Motor neuron (in vitro differentiated cells): ENCODE measurements at regions of chr1 and their contacts with region 1.

Region 1: DNA sequence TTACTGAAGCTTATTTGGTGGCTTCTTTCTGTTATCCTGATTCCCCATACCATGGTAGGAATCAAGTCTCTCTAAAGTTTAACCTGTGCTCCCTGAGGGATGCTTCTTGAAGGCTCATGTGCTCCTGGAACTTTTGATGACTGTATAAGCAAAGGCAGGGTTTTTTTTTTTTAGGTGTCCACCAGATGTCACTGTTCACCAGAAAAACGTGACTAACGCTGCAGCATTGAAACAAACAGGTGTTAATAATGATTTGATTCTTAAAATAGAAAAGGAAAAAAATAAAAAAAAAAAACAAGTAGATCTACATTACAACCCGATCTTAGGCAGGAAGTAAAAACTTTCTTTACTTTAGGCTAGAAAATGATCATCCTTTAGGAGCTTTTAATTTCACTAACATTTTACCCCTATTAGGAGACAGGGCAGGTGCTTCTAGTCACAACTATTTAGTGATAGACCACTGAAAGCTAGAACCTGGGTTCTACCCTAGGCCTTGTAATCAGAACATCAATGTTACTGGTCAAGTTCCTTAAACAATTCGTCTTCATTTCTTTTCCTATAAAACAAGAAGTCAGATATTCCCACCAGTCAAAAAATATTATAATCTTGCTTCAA is 223.0 kb downstream of the PLA2G4A start:
- ATAC-seq: peak; percentile 45 to 72 (median 60)
- H3K4me3 ChIP-seq: no peak overlapping the region
- H3K27ac ChIP-seq: no peak overlapping the region
- H3K4me1 ChIP-seq: no peaks in the 10 kb centered on the region

Region 2: DNA sequence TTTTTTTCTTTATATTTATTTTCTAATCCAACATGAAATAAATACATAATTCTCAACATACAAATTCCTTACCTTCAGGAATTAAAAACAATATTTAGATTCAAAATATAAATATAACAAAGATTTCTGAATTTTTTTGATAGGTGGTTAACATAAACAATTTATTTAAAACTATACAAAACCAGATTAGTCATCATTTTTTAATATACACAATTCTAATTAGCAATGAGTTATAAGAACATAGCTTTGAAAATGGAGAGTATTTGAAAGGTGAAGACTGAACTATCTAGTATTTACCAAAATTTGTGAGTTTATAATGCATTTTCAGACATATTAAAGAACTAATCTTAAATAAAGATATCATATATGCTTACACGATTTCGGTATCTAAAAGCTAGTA is 714.2 kb before region 1 on chr1:
- in situ Hi-C with region 1: no loop called
- ATAC-seq: no peak
- H3K4me3 ChIP-seq: no peak overlapping the region
- H3K27ac ChIP-seq: no peak overlapping the region
- H3K4me1 ChIP-seq: no peaks in the 10 kb centered on the region

Region 3: GRCh38 chr1:187237542-187237941 is 185.8 kb after region 1 on chr1:
- in situ Hi-C with region 1: no loop called
- ATAC-seq: no peak
- H3K4me3 ChIP-seq: no peak overlapping the region
- H3K27ac ChIP-seq: no peak overlapping the region
- H3K4me1 ChIP-seq: peaks cover 9 to 13% of the 10 kb centered on the region in 2 donors

Region 4: GRCh38 chr1:187264995-187265602 is 213.4 kb after region 1 on chr1:
- in situ Hi-C with region 1: loop called in 1 of 9 experiments (anchors 25 kb)
- ATAC-seq: peak; percentile 82 to 93 (median 88)
- H3K4me3 ChIP-seq: no peak overlapping the region
- H3K27ac ChIP-seq: no peak overlapping the region
- H3K4me1 ChIP-seq: no peaks in the 10 kb centered on the region

Region 5: GRCh38 chr1:187443939-187444338 is 392.2 kb after region 1 on chr1:
- in situ Hi-C with region 1: no loop called
- ATAC-seq: no peak
- H3K4me3 ChIP-seq: no peak overlapping the region
- H3K27ac ChIP-seq: no peak overlapping the region
- H3K4me1 ChIP-seq: no peaks in the 10 kb centered on the region